ENCODE measurements at regions of chr17 and their contacts with region 1.

Region 1: DNA sequence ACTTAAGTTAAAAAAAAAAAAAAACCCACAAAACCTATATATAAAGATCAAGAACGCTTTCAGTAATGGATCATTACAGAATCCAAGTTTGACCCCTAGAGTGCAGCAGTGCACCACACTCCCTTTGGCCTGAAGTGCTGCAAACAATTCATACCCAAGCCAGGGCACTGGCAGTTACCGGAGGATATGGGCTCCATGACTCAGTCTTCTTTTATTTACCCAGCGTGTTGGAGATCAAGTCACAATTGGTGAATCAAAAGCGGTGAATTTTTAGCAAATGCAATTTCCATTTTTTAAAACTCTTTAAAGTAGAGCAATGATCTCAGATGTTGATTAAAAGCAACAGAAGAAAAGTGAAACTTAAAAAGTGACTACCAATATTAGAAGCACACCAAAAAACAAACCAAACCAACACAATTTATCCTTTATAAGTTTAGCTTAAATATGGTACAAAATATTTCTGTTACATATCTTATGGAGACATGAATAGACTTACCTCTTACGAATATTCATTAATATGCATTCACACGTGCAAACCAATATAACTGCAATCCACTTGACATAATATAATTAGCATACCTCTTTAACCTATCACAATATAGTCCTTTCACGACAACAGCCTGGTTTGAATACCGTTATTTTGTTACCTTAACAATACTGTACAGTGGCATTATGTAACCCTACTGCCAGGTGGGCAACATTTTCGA is 46.3 kb downstream of the ZNF652 start:
- DNase-seq: peak; percentile 76 to 79
- ATAC-seq: peak; percentile 99 to 100
- H3K4me3 ChIP-seq: peak overlapping the region; percentile 9 to 28 (median 25)
- H3K27ac ChIP-seq: peak overlapping the region; percentile 37 to 74 (median 62)
- H3K4me1 ChIP-seq: peaks cover 9 to 12% of the 10 kb centered on the region in 2 donors
- H3K27me3 ChIP-seq: no peaks in the 10 kb centered on the region
- CTCF ChIP-seq: peak; percentile 64 to 88 (median 83)
- POLR2A ChIP-seq: no peak

Region 2: DNA sequence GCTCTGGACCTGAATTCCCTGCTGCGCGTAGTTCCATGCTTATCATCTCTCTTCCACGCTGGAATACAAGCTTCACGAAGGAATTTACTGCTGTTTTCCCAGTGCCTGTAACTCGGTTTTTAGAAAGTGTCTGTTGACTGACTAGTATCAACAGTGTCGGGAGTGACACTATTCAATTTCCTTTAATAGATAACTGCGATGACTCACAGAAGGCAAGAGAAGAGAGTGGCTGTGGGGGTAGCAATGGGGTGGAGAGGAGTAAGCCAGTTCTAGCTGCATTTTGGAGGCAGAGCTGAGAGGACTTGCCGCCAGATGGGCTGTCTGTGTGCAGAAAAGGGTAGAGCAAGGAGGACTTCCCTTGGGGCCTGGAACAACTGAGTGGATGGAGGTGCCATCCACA is 157.9 kb before region 1 on chr17:
- in situ Hi-C with region 1: no loop called
- intact Hi-C with region 1: no loop called
- DNase-seq: no peak
- ATAC-seq: no peak
- H3K4me3 ChIP-seq: no peak overlapping the region
- H3K27ac ChIP-seq: no peak overlapping the region
- H3K4me1 ChIP-seq: no peaks in the 10 kb centered on the region
- H3K27me3 ChIP-seq: peaks cover 22 to 24% (median 24%) of the 10 kb centered on the region in 3 donors
- CTCF ChIP-seq: no peak
- POLR2A ChIP-seq: no peak

Region 3: DNA sequence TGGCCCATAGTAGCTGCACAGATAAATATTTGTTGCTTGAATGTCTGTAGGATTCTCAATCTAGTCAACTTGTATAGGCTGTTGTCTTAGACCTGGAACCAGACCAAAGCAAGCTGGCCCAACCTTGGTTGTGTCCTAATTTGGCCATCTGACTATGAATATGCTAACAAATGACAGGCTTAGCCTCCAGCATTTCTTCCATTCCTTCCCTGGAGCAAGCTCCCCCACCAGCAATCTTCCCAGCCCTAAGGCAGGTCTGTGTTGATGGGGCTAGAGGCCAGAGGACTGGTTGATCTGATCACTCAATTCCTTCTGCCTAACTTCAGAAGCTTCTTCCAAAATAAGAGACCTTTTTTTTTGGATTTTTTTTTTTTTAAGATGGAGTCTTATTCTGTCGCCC is 75.7 kb before region 1 on chr17:
- in situ Hi-C with region 1: no loop called
- intact Hi-C with region 1: no loop called
- DNase-seq: no peak
- ATAC-seq: no peak
- H3K4me3 ChIP-seq: no peak overlapping the region
- H3K27ac ChIP-seq: no peak overlapping the region
- H3K4me1 ChIP-seq: no peaks in the 10 kb centered on the region
- H3K27me3 ChIP-seq: no peaks in the 10 kb centered on the region
- CTCF ChIP-seq: no peak
- POLR2A ChIP-seq: no peak

Region 4: DNA sequence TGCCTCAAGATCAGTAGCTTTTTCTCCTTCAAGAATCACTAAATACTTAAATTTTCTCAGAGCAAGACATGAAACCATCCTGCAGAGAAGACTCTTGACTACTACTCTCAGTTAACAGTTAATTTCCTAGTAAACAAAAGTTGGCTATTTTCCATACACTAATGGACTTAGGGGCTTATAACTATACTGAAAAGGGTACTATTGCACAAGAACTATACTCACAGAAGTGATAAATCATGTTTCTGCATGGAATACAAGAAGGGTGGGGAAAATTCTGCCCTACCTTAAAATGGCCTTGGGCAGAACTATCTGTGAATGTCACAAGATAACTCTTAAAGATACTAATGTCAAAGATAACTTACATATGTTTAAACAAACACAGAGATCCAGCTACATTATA is 33.8 kb after region 1 on chr17:
- in situ Hi-C with region 1: no loop called
- intact Hi-C with region 1: no loop called
- DNase-seq: no peak
- ATAC-seq: no peak
- H3K4me3 ChIP-seq: no peak overlapping the region
- H3K27ac ChIP-seq: no peak overlapping the region
- H3K4me1 ChIP-seq: peaks cover 13 to 19% of the 10 kb centered on the region in 2 donors
- H3K27me3 ChIP-seq: no peaks in the 10 kb centered on the region
- CTCF ChIP-seq: no peak
- POLR2A ChIP-seq: no peak

Region 5: GRCh38 chr17:49361902-49362722 is 46.4 kb after region 1 on chr17 and contains the start of gene ZNF652:
- in situ Hi-C with region 1: no loop called
- intact Hi-C with region 1: loop called (anchors 1 kb)
- DNase-seq: peak; percentile 78 to 86
- ATAC-seq: peak; percentile 87 to 89
- H3K4me3 ChIP-seq: peak within 1 kb of the TSS; percentile 88 to 97 (median 92)
- H3K27ac ChIP-seq: peak within 1 kb of the TSS; percentile 80 to 92 (median 84)
- H3K4me1 ChIP-seq: peaks cover 29 to 33% of the 10 kb centered on the region in 2 donors
- H3K27me3 ChIP-seq: no peaks in the 10 kb centered on the region
- CTCF ChIP-seq: no peak
- POLR2A ChIP-seq: peak; percentile 21 to 43
- total RNA-seq, gene ZNF652: 32.8 to 49.6 (median 41.1) TPM

Region 6: DNA sequence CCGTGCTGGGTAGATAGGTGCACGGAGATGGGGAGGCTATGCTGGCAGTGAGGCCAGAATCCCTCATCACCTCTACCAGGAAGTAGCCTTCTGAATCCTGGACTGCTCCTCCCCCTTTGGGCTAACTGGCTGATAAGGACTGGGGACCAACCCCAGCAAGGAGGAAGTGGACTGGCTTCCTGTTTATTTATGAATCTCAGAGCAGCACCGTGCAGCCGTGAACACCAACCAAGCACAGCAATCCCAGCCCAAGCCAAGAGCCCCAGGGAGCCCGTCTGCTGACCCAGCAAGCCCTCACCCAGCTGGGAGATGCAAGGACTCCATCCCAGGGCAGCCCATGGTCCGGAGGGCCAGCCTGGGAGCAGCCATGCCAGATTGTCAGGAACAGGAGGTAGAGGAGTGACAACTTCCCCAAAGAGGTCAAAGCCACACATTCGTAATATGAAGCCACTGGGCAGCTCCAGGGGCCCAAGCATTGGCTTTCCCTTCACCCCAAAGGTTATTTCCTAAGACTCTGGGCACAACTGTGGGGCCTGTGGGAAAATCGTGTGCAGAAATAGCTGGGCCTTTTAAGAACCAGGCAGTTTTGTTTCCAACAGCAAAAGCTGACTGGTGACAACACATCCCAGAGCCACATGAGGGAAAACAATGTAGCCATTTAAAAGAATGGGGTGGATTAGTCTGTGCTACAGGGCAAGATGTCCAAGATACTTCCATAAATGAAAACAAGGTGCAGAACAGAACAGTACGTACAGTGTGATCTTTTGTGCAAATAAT is 75.0 kb after region 1 on chr17:
- in situ Hi-C with region 1: loop called (anchors 5 kb)
- intact Hi-C with region 1: loop called (anchors 1 kb)
- DNase-seq: no peak
- ATAC-seq: no peak
- H3K4me3 ChIP-seq: no peak overlapping the region
- H3K27ac ChIP-seq: peak overlapping the region in 1 of 4 donors; percentile 47
- H3K4me1 ChIP-seq: peaks cover 12 to 15% of the 10 kb centered on the region in 2 donors
- H3K27me3 ChIP-seq: no peaks in the 10 kb centered on the region
- CTCF ChIP-seq: no peak
- POLR2A ChIP-seq: no peak

Region 7: GRCh38 chr17:49399995-49400394 is 84.3 kb after region 1 on chr17:
- in situ Hi-C with region 1: loop called in 3 of 4 experiments (anchors 5 kb)
- intact Hi-C with region 1: loop called (anchors 1 kb)
- DNase-seq: no peak
- ATAC-seq: no peak
- H3K4me3 ChIP-seq: no peak overlapping the region
- H3K27ac ChIP-seq: no peak overlapping the region
- H3K4me1 ChIP-seq: peaks cover 3 to 7% of the 10 kb centered on the region in 2 donors
- H3K27me3 ChIP-seq: no peaks in the 10 kb centered on the region
- CTCF ChIP-seq: no peak
- POLR2A ChIP-seq: no peak

Region 8: DNA sequence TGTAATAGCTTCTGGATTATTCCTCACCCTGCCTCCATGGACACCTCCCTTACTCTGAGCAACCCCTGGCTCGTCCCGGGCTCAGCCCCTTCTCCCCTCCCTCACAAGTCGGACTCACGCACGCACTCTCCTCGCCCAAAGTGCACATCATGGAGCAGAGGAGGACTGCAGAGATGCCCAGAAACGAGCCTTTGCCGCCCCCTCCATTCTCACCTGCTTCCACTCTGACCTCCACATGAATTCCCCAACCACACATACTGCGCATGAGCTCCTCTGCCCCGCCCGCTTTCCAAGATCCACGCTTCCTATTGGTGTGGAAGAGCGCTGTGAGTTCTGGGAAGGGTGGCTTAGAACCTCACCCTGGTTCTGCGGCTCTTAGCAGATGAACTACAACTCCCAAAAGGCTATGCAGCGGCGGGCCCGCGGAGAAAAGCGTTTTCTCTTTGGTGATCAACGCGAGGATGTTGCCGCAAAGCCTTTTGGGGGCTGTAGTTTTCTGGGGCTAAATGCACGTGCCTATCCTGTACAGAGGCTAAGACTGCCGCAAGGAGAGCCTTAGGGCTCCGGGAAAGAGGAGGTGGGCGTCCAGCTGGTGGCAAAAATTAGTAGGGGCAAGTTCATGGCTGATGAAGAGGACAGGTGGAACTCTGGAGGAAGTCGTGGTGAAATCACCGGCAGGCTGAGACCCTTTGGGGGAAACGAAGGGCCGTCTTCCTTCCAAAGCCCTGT is 99.1 kb after region 1 on chr17 and contains the start of gene PHB1:
- in situ Hi-C with region 1: no loop called
- intact Hi-C with region 1: loop called (anchors 5 kb)
- DNase-seq: peak; percentile 97
- ATAC-seq: peak; percentile 99 to 100
- H3K4me3 ChIP-seq: peak within 1 kb of the TSS; percentile 63 to 97 (median 93)
- H3K27ac ChIP-seq: peak within 1 kb of the TSS; percentile 73 to 90 (median 75)
- H3K4me1 ChIP-seq: peaks cover 14 to 18% of the 10 kb centered on the region in 2 donors
- H3K27me3 ChIP-seq: no peaks in the 10 kb centered on the region
- CTCF ChIP-seq: no peak
- POLR2A ChIP-seq: peak in 1 of 2 donors; percentile 32
- total RNA-seq, gene PHB1: 102 to 137 (median 116) TPM

Region 9: GRCh38 chr17:50274142-50274896 is 958.6 kb after region 1 on chr17 and contains the start of gene TMEM92:
- in situ Hi-C with region 1: no loop called
- intact Hi-C with region 1: no loop called
- DNase-seq: no peak
- ATAC-seq: no peak
- H3K4me3 ChIP-seq: peak within 1 kb of the TSS in 3 of 4 donors; percentile 54 to 69 (median 67)
- H3K27ac ChIP-seq: no peak within 1 kb of the TSS
- H3K4me1 ChIP-seq: peaks cover 0 to 8% of the 10 kb centered on the region in 2 donors
- H3K27me3 ChIP-seq: peaks cover 13 to 19% (median 18%) of the 10 kb centered on the region in 3 donors
- CTCF ChIP-seq: no peak
- POLR2A ChIP-seq: no peak
- total RNA-seq, gene TMEM92: not detected

Measured in gastrocnemius medialis (tissue), 4 donors.